CD14-positive monocyte (primary cell): ENCODE measurements at regions of chr17 and their contacts with region 1.

Region 1: DNA sequence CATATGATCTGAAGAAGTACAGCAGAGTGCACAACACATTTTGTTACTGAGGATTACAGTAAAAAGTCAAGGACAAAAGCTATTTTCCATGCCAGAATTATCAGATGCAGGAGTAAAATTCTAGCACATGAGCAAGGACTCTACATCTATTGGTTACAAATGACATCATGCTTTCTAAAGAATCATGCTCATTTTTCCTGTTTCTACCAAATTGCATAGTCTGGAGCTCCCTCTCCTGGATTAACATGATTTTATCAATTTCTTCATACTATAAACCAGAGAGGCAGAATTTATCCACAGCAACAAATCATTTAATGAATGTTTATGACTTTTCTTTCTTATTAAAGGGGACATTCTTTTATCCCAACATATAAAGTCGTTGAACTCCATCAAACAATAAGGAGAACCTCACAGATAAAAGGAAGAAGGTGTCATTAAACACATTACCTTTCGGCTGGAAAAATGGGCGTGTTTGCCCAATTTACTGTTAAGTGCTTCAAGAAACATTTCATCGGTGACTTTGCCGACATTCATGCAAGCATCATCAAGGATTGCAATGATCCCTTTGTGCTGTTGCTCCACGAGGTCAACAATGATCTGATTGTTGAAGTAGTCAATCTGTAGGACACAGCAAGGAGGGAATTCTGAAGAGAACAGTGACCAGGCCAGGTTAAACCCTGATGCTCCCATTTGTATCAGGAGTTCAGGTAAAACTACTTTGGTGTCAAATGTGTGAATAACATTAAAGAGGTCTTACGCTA is 121.7 kb downstream of the MYO1D start:
- DNase-seq: peak; percentile 39 to 70 (median 63)
- H3K4me3 ChIP-seq: no peak overlapping the region
- H3K4me3 Mint-ChIP-seq: no peak overlapping the region
- H3K27ac ChIP-seq: no peak overlapping the region
- H3K27ac Mint-ChIP-seq: no peak overlapping the region
- H3K4me1 ChIP-seq: no peaks in the 10 kb centered on the region
- H3K4me1 Mint-ChIP-seq: peaks cover 2% of the 10 kb centered on the region
- H3K27me3 ChIP-seq: peaks cover 0 to 4% of the 10 kb centered on the region in 2 donors
- H3K27me3 Mint-ChIP-seq: peaks cover 0 to 5% (median 2%) of the 10 kb centered on the region in 3 donors
- CTCF ChIP-seq: peak; percentile 80

Region 2: GRCh38 chr17:32461853-32462617 is 293.2 kb before region 1 on chr17:
- intact Hi-C with region 1: loop called in 1 of 2 experiments (anchors 2 kb)
- DNase-seq: peak; percentile 34 to 63 (median 51)
- H3K4me3 ChIP-seq: no peak overlapping the region
- H3K4me3 Mint-ChIP-seq: no peak overlapping the region
- H3K27ac ChIP-seq: no peak overlapping the region
- H3K27ac Mint-ChIP-seq: peak overlapping the region in 1 of 7 donors; percentile 10
- H3K4me1 ChIP-seq: no peaks in the 10 kb centered on the region
- H3K4me1 Mint-ChIP-seq: no peaks in the 10 kb centered on the region
- H3K27me3 ChIP-seq: no peaks in the 10 kb centered on the region
- H3K27me3 Mint-ChIP-seq: no peaks in the 10 kb centered on the region
- CTCF ChIP-seq: peak; percentile 82

Region 3: DNA sequence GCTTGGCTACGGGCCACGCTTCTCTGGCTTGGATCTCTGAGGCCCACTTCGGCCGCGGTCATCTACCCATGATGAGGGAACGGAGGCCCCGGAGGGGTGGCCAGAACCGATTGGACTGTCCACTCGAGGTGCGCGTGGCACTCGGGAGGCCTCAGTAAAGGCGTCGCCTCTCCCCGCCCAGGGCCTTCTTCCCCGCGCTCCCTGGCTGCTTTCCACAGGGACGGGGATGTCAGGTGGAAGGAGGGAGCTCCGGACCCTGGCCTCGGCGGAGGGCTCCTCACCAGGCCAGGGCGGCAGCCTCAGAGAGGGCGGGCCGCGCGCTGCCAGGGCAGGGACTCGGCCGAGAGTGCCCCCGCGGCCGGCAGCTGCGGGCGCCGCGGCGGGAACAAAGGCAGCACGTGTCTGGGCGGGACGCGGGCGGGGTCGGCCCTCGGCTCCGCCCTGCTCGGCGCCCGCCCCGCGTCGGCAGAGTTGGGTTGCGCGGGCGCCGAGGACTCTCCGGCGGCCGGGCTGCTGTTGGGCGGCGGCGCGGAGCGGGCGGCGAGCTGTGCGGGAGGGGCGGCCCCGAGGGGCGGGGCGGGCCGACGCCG is 269.0 kb before region 1 on chr17:
- intact Hi-C with region 1: loop called in 1 of 2 experiments (anchors 5 kb)
- DNase-seq: peak; percentile 35 to 63 (median 55)
- H3K4me3 ChIP-seq: peak overlapping the region; percentile 8 to 63 (median 43)
- H3K4me3 Mint-ChIP-seq: peak overlapping the region; percentile 65 to 76
- H3K27ac ChIP-seq: no peak overlapping the region
- H3K27ac Mint-ChIP-seq: no peak overlapping the region
- H3K4me1 ChIP-seq: peaks cover 36 to 42% of the 10 kb centered on the region in 2 donors
- H3K4me1 Mint-ChIP-seq: peaks cover 39% of the 10 kb centered on the region
- H3K27me3 ChIP-seq: peaks cover 0 to 3% of the 10 kb centered on the region in 2 donors
- H3K27me3 Mint-ChIP-seq: peaks cover 0 to 9% (median 6%) of the 10 kb centered on the region in 3 donors
- CTCF ChIP-seq: no peak

Region 4: DNA sequence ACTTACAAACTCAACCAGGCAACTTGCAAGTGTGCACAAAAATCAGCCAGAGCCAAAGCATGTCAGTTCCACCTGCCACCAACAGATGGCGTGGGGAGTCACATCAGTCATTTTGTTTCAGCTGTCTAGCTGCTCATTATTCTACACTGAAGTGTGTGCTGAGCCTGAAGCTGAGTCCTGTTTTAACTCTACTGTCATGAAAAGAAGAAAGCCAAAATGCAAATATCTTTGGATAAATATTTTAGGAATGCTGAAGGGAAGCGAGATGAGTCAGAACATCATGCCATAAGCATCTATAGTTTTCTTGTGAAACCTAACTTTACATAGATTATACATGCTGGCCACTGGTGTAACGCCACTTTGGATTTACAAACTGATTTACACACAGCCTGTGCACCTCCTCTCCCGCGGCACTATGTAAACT is 95.8 kb before region 1 on chr17:
- intact Hi-C with region 1: loop called (anchors 5 kb)
- DNase-seq: peak; percentile 33 to 50 (median 41)
- H3K4me3 ChIP-seq: no peak overlapping the region
- H3K4me3 Mint-ChIP-seq: no peak overlapping the region
- H3K27ac ChIP-seq: no peak overlapping the region
- H3K27ac Mint-ChIP-seq: no peak overlapping the region
- H3K4me1 ChIP-seq: peaks cover 0 to 3% of the 10 kb centered on the region in 2 donors
- H3K4me1 Mint-ChIP-seq: peaks cover 4% of the 10 kb centered on the region
- H3K27me3 ChIP-seq: no peaks in the 10 kb centered on the region
- H3K27me3 Mint-ChIP-seq: peaks cover 0 to 2% (median 0%) of the 10 kb centered on the region in 3 donors
- CTCF ChIP-seq: peak; percentile 95

Region 5: GRCh38 chr17:32803544-32803943 is 48.3 kb after region 1 on chr17:
- intact Hi-C with region 1: no loop called
- DNase-seq: no peak
- H3K4me3 ChIP-seq: no peak overlapping the region
- H3K4me3 Mint-ChIP-seq: no peak overlapping the region
- H3K27ac ChIP-seq: no peak overlapping the region
- H3K27ac Mint-ChIP-seq: no peak overlapping the region
- H3K4me1 ChIP-seq: no peaks in the 10 kb centered on the region
- H3K4me1 Mint-ChIP-seq: peaks cover 8% of the 10 kb centered on the region
- H3K27me3 ChIP-seq: no peaks in the 10 kb centered on the region
- H3K27me3 Mint-ChIP-seq: peaks cover 1 to 4% (median 2%) of the 10 kb centered on the region in 3 donors
- CTCF ChIP-seq: no peak